Activated CD4-positive, alpha-beta T cell treated with anti-CD3 and anti-CD28 coated beads for 36 hours (primary cell): ENCODE measurements at regions of chr9 and their contacts with region 1.

Region 1: DNA sequence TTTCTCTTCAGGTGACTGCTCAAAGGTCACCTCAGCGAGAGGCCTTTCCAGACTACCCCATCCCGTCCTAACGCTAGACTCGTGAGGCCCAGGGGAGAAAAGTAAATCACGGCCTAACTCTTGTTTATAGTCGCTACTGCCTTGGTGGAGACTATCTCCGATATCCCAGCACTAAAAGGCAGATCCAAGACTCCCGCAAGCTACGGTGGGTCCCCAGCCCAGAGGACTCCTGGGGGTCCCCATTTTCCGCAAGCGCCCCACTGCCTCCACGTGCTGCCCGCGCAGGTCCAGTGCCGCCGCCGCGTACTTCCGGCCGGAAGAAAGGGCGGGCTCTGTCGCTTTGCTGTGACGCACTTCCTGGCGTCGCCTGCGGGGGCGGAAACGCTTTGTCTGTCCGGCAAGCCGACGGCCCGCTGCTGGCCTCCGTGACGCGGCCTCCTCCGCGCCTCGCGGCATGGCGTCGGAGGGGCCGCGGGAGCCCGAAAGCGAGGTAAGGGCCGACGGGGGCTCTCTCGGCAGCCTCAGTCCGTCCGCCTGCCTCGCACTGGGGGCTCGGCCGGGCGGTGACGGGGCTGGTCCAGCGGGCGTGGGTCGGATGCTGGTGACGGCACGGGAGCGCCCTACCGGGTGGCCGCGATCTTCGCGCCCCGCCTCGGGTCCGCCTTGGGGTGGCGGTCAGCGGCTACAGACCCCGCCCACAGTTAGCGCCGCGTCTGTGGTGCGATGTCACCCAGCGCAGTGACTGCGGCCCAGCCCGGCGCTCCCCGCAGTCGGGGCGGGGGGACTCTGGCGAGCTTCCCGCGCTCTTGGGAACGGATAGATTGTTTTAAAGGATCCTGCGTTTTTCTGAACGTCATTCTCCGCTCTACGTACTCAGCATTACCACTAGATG is at the start of gene SECISBP2:
- DNase-seq: peak; percentile 97
- ATAC-seq: peak; percentile 90
- H3K4me3 Mint-ChIP-seq: peak within 1 kb of the TSS; percentile 82
- H3K27ac Mint-ChIP-seq: peak within 1 kb of the TSS; percentile 98
- H3K4me1 Mint-ChIP-seq: peaks cover 79% of the 10 kb centered on the region
- H3K27me3 Mint-ChIP-seq: no peaks in the 10 kb centered on the region
- total RNA-seq, gene SECISBP2: 38.6 to 49.9 TPM

Region 2: DNA sequence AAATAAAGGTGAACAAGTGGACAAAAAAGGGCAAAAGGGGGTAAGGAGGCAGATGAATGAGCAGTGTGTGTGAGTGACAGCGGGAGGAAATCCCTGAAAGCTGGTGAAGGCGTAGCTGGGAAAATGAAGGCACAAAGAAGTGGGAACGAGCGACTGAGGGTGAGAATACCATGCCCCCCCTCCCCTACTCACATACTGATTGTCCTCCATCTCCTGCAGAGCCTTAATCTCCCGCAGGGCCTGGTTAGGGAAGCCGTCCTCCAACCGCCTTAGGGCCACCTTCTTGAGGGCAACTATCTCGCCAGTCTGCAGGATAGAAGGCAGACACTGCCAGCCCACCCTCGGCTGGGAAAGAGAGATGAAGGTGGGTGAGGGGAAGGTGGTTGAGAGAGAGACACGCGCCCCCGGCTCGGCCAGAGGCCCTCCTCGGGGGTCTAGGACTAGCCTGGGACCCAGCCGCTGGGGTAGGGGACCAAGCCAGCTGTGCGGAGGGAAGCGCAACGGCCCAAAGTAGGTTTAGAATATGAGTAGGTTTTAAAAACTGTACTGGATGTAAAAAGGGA is 1344.6 kb before region 1 on chr9:
- CTCF ChIA-PET with region 1: no interaction called
- POLR2A ChIA-PET with region 1: no interaction called
- intact Hi-C with region 1: loop called in 1 of 2 experiments (anchors 10 kb)
- DNase-seq: peak; percentile 19
- ATAC-seq: no peak
- H3K4me3 Mint-ChIP-seq: peak overlapping the region; percentile 82
- H3K27ac Mint-ChIP-seq: peak overlapping the region; percentile 58
- H3K4me1 Mint-ChIP-seq: peaks cover 22% of the 10 kb centered on the region
- H3K27me3 Mint-ChIP-seq: no peaks in the 10 kb centered on the region

Region 3: DNA sequence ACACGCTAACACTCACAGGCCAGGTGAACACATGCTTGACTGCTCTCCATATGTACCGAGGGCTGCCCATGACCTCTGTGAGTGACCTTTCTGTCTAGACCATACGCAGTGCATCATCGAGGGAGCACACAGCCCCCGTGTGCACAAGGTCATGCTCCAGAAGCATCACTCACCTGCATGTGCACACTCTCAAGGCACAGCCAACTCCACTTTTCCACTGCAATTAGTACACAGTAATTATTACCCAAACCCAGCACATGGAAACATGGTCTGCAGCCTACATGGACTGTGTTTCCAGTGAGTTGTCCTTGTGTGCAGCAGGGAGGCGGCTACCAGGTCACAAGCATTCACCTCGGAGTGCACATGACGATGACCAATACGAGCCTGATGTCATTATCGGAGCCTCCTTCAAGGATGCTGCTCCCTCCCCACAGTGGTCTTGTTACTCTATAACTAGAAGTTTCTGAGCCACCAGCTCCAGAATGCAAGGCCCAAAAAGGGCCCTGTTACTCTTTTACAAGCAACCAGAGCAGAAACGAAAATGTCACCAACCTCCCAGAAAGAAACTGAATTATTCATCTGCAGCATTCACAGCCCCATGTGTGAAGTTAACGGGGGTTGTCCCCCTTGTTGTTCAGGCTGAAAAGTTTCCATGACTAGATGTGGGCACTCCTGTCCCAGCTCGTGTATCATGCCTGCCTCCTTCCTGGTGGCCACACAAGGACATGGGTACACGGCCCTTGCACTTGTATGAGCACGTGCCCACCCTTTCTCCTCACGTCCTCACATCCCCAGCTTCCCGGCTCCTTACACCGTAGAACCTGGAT is 148.3 kb after region 1 on chr9:
- CTCF ChIA-PET with region 1: no interaction called
- POLR2A ChIA-PET with region 1: no interaction called
- intact Hi-C with region 1: loop called in 1 of 2 experiments (anchors 1 kb)
- DNase-seq: peak; percentile 80
- ATAC-seq: peak; percentile 73
- H3K4me3 Mint-ChIP-seq: peak overlapping the region; percentile 62
- H3K27ac Mint-ChIP-seq: peak overlapping the region; percentile 95
- H3K4me1 Mint-ChIP-seq: peaks cover 96% of the 10 kb centered on the region
- H3K27me3 Mint-ChIP-seq: no peaks in the 10 kb centered on the region

Region 4: DNA sequence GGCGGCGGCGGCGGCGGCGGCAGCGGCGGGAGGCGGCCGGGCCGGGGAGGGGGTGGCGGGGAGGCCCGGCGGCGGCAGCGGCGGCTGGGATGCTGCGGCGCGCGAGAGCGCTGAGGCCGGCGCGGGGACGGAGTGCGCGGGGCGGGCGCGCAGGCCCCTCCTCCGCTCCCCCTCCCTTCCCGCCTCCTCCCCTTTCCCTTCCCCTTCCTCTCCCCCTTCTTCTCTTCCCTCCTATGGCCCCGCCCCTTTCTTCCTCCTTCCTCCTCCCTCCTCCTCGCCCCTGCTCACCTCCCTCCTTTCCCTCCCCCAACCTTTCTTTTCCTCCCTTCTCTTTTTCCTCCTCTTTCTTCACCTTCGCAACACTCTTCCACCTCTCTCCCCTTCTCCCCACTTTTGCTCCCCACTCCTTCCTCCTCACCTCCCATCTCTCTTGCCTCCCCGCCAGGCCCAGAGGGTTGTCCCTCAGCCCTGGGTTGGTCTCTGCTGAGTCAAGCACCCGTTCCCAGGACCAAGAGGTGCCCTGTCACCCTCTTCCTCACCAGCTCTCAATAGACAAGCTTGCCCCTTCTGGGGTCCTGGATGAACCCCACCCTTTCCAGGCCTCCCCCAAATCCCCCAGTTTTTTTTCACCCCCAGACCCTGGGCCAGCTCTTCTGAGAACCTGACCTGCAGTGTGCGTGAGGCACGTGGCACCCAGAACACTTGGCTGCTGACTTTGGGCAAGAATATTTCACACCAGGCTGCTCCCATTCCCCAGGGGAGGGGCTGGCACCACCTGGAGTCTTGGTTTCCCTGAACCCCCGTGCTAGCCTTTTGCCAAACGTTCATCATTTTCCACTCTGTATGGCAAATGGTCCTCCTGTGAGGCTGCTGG is 179.8 kb after region 1 on chr9 and contains the start of gene SEMA4D:
- CTCF ChIA-PET with region 1: no interaction called
- POLR2A ChIA-PET with region 1: no interaction called
- intact Hi-C with region 1: loop called in 1 of 2 experiments (anchors 1 kb)
- DNase-seq: peak; percentile 85
- ATAC-seq: peak; percentile 38
- H3K4me3 Mint-ChIP-seq: peak within 1 kb of the TSS; percentile 89
- H3K27ac Mint-ChIP-seq: peak within 1 kb of the TSS; percentile 91
- H3K4me1 Mint-ChIP-seq: peaks cover 75% of the 10 kb centered on the region
- H3K27me3 Mint-ChIP-seq: no peaks in the 10 kb centered on the region
- total RNA-seq, gene SEMA4D: 215 to 226 TPM

Region 5: GRCh38 chr9:90102292-90102901 is 784.0 kb after region 1 on chr9:
- CTCF ChIA-PET with region 1: no interaction called
- POLR2A ChIA-PET with region 1: no interaction called
- intact Hi-C with region 1: loop called in 1 of 2 experiments (anchors 10 kb)
- DNase-seq: peak; percentile 90
- ATAC-seq: peak; percentile 100
- H3K4me3 Mint-ChIP-seq: no peak overlapping the region
- H3K27ac Mint-ChIP-seq: no peak overlapping the region
- H3K4me1 Mint-ChIP-seq: peaks cover 3% of the 10 kb centered on the region
- H3K27me3 Mint-ChIP-seq: peaks cover 2% of the 10 kb centered on the region